WTC11 (cell line): ENCODE measurements at regions of chr21 and their contacts with region 1.

Region 1: GRCh38 chr21:30257773-30258172 is 25.0 kb downstream of the KRTAP24-1 start:
- DNase-seq: peak; percentile 27
- ATAC-seq: peak; percentile 98
- H3K4me3 Mint-ChIP-seq: no peak overlapping the region
- H3K27ac Mint-ChIP-seq: no peak overlapping the region
- H3K4me1 Mint-ChIP-seq: no peaks in the 10 kb centered on the region
- H3K27me3 Mint-ChIP-seq: no peaks in the 10 kb centered on the region
- CTCF ChIP-seq: peak; percentile 61

Region 2: GRCh38 chr21:30245061-30245460 is 12.7 kb before region 1 on chr21:
- CTCF ChIA-PET with region 1: interaction called, 11 read pairs
- POLR2A ChIA-PET with region 1: no interaction called
- DNase-seq: no peak
- ATAC-seq: no peak
- H3K4me3 Mint-ChIP-seq: no peak overlapping the region
- H3K27ac Mint-ChIP-seq: no peak overlapping the region
- H3K4me1 Mint-ChIP-seq: no peaks in the 10 kb centered on the region
- H3K27me3 Mint-ChIP-seq: no peaks in the 10 kb centered on the region
- CTCF ChIP-seq: no peak

Region 3: DNA sequence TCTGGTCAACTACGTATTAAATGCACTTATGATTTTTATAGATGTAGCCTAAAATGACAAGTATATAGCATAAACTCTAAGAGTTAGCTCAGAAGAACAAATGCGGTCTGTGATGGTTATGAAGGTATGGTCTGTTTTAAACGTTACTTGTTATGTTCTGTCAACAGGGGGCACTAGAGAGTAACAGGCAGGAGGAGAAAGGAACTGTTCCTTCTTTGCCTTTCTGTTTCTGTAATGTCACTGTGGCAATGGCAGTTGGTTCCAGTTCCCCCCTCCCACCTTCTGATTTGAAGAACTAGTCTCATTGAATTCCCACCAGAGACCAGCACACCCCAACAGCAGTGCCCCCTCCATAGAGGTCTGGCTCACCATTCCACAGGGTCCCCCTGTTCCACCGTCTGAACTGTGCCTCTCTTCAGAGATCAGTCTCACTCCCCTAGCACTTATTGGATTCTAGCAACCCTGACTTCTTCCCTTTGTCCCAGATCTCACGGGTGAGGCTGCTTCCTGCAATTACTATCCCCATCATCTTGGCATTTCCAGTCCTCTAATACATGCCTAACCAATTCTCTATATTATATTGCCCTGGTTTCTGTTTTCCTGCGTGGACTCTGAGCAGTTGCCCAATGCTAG is 11.0 kb after region 1 on chr21:
- CTCF ChIA-PET with region 1: interaction called, 11 read pairs
- POLR2A ChIA-PET with region 1: no interaction called
- DNase-seq: no peak
- ATAC-seq: peak; percentile 89
- H3K4me3 Mint-ChIP-seq: no peak overlapping the region
- H3K27ac Mint-ChIP-seq: no peak overlapping the region
- H3K4me1 Mint-ChIP-seq: no peaks in the 10 kb centered on the region
- H3K27me3 Mint-ChIP-seq: no peaks in the 10 kb centered on the region; the same call in 1 of the 2 replicates
- CTCF ChIP-seq: peak; percentile 50; the same call in 1 of the 2 replicates